ENCODE measurements at regions of chr2 and their contacts with region 1.

Region 1: DNA sequence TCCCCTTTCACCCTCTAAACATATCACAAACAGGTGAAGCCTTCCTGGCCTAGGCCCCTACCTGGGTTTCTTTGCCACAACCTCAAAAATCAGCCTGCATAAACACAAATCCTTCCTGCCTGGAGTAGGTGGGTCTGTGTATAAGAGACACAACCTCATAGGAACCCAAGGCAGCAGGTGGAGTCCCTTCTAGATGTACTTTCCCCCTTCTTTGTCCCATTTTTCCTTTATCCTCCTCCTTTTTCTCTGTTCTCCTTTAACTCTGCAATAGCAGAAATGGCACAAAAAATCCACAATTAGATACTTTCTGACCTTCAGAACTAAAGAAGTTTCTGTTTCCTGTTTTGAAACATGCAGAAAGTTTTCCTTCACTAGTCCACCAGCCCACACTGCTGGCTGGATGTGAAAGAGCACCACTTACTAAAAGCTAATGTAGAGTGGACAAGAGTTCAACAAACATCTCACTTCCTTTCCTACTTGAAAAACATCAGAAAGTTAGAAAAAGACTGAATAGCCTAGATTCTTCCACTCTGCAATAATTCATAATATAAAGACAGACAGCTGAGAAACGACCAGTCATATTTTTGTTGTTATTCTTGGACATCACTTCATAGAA is 11.2 kb downstream of the SLC40A1 start:
- DNase-seq: peak in 1 of 5 donors; percentile 48
- H3K4me3 ChIP-seq: no peak overlapping the region
- H3K27ac ChIP-seq: peak overlapping the region; percentile 18 to 82
- H3K4me1 ChIP-seq: peaks cover 0 to 20% (median 20%) of the 10 kb centered on the region in 3 donors
- H3K27me3 ChIP-seq: no peaks in the 10 kb centered on the region
- CTCF ChIP-seq: no peak

Region 2: GRCh38 chr2:189466660-189467059 is 102.7 kb before region 1 on chr2:
- intact Hi-C with region 1: loop called (anchors 10 kb)
- DNase-seq: peak in 2 of 5 donors; percentile 19 to 60
- H3K4me3 ChIP-seq: no peak overlapping the region
- H3K27ac ChIP-seq: no peak overlapping the region
- H3K4me1 ChIP-seq: no peaks in the 10 kb centered on the region
- H3K27me3 ChIP-seq: no peaks in the 10 kb centered on the region
- CTCF ChIP-seq: peak; percentile 39

Measured in kidney (tissue), 22 donors.